ENCODE measurements at regions of chr2 and their contacts with region 1.

Region 1: DNA sequence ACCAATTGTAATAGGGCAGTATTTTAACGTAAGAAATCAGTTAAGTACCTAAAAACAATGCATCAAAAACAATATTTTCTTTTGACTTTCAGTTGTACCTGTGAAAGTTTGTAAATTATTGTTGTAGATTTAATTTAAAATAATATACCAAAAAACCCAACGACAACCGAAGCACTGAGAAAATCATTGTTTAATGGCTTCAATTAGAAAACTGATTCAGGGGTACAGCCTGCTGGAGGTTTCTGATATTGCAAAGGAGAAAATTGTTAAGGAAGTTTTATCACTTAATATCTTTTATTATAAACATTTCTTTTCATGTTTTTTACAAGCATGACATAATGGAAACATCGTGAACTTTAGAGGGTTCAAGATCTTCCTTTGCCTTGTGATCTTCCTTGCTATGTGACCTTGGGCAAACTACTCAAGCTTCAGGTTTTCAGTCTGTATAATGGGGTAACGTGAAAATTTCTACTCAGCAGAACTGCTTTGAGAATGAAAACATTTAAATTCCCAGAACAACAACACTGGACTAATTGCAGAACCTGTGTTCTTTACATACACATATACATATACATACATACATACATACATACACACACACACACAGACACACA is 76.3 kb upstream of the GLS start:
- DNase-seq: peak; percentile 8
- H3K4me3 ChIP-seq: no peak overlapping the region
- CTCF ChIP-seq: peak; percentile 45

Region 2: GRCh38 chr2:190835303-190835930 is 31.1 kb after region 1 on chr2:
- in situ Hi-C with region 1: loop called (anchors 5 kb)
- DNase-seq: peak; percentile 79
- H3K4me3 ChIP-seq: no peak overlapping the region
- CTCF ChIP-seq: no peak

Measured in astrocyte of the cerebellum (primary cell).